IMR-90 (cell line): ENCODE measurements at regions of chr4 and their contacts with region 1.

Region 1: GRCh38 chr4:168183717-168184608 is 91.6 kb downstream of the ANXA10 start:
- DNase-seq: peak; percentile 59
- ATAC-seq: peak; percentile 61
- H3K4me3 ChIP-seq: no peak overlapping the region
- H3K27ac ChIP-seq: no peak overlapping the region
- H3K4me1 ChIP-seq: no peaks in the 10 kb centered on the region
- H3K27me3 ChIP-seq: no peaks in the 10 kb centered on the region
- CTCF ChIP-seq: peak; percentile 66
- POLR2A ChIP-seq: no peak
- RAD21 ChIP-seq: peak; percentile 80

Region 2: GRCh38 chr4:168318266-168318895 is 134.4 kb after region 1 on chr4 and contains the start of gene DDX60:
- CTCF ChIA-PET with region 1: no interaction called
- POLR2A ChIA-PET with region 1: no interaction called
- dilution Hi-C with region 1: no loop called
- in situ Hi-C with region 1: no loop called
- intact Hi-C with region 1: loop called (anchors 5 kb)
- DNase-seq: peak; percentile 73
- ATAC-seq: peak; percentile 93
- H3K4me3 ChIP-seq: peak within 1 kb of the TSS; percentile 74
- H3K27ac ChIP-seq: peak within 1 kb of the TSS; percentile 85
- H3K4me1 ChIP-seq: no peaks in the 10 kb centered on the region
- H3K27me3 ChIP-seq: no peaks in the 10 kb centered on the region
- CTCF ChIP-seq: peak; percentile 40
- POLR2A ChIP-seq: peak; percentile 28; the same call in 1 of the 2 replicates
- RAD21 ChIP-seq: peak; percentile 41
- total RNA-seq, gene DDX60: 6.6 and 11.4 TPM in 2 replicates

Region 3: DNA sequence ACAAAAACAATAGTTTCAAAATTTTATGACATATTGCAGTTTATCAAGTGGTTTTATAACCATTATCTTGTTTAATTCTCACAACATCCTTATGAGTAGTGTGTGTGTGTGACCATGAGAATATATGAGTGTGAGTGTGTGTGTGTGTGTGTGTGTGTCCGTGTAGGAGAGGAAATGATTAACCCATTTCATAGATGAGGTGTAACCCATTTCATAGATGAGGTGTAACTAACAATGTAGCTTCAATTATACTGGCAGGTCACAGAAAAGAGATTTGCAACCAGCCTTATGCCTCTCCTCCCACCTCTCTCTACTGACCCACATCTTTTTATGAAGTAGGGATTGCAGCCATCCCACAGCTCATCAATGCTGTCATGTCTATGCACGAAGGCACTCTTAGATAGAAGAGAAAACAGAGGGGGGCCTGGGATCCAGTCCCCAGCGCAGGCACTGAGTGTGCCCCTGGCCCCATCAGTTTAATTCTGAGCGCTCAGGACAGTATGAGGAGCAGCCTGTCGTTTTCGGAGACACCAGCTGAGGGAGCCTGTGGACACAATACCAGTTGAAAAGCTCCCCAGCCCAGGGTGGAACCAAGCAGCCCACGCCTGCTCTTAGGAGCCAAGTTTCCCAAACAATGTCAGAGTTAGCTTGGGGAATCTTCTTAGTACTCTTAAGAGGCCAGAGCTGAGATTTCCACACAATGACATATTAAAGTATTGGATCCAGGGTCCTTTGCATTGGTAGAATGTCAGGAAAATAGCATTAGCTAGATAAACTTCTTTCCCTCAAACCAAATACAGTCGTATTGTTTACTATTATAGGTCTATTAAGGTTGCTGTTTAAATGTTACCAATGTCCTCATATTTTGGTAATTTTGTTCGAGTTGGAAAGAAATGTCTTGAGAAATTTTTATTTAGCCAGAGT is 401.5 kb after region 1 on chr4:
- CTCF ChIA-PET with region 1: no interaction called
- POLR2A ChIA-PET with region 1: no interaction called
- dilution Hi-C with region 1: no loop called
- in situ Hi-C with region 1: no loop called
- intact Hi-C with region 1: loop called (anchors 5 kb)
- DNase-seq: peak; percentile 82
- ATAC-seq: peak; percentile 87
- H3K4me3 ChIP-seq: no peak overlapping the region
- H3K27ac ChIP-seq: no peak overlapping the region
- H3K4me1 ChIP-seq: peaks cover 18% of the 10 kb centered on the region
- H3K27me3 ChIP-seq: no peaks in the 10 kb centered on the region
- CTCF ChIP-seq: peak; percentile 76
- POLR2A ChIP-seq: no peak
- RAD21 ChIP-seq: peak; percentile 88

Region 4: DNA sequence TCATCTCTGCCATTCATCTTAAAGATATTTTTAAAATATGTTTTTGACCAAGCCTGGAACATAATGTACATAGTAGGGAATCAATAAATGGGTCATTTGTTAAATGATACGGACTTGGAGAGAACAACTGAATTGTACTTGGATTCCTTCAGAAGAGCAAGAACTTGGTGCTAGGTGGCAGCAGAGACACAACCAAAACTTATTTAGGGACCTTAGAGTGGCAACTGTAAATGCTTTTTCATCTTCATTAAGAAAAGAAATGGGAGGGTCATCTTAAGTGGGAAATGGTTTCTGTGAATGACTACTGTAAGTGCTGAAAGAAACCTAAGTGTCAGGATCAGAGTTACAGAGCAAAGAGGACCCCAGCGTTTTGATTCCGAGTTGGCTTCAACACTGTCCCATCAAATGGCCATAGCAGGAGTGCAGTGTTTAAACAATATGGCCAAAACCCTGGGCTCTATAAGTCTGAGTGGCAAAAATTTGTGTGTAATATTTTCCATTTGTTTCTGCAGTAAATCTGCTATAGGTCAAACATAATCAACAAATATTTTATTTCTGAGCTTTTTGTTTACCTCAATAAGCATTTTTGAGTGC is 526.5 kb after region 1 on chr4:
- CTCF ChIA-PET with region 1: interaction called, 3 read pairs
- POLR2A ChIA-PET with region 1: no interaction called
- dilution Hi-C with region 1: no loop called
- in situ Hi-C with region 1: no loop called
- intact Hi-C with region 1: loop called (anchors 2 kb)
- DNase-seq: peak; percentile 79
- ATAC-seq: peak; percentile 77
- H3K4me3 ChIP-seq: no peak overlapping the region
- H3K27ac ChIP-seq: no peak overlapping the region
- H3K4me1 ChIP-seq: peaks cover 11% of the 10 kb centered on the region
- H3K27me3 ChIP-seq: no peaks in the 10 kb centered on the region
- CTCF ChIP-seq: peak; percentile 71
- POLR2A ChIP-seq: no peak
- RAD21 ChIP-seq: peak; percentile 80

Region 5: DNA sequence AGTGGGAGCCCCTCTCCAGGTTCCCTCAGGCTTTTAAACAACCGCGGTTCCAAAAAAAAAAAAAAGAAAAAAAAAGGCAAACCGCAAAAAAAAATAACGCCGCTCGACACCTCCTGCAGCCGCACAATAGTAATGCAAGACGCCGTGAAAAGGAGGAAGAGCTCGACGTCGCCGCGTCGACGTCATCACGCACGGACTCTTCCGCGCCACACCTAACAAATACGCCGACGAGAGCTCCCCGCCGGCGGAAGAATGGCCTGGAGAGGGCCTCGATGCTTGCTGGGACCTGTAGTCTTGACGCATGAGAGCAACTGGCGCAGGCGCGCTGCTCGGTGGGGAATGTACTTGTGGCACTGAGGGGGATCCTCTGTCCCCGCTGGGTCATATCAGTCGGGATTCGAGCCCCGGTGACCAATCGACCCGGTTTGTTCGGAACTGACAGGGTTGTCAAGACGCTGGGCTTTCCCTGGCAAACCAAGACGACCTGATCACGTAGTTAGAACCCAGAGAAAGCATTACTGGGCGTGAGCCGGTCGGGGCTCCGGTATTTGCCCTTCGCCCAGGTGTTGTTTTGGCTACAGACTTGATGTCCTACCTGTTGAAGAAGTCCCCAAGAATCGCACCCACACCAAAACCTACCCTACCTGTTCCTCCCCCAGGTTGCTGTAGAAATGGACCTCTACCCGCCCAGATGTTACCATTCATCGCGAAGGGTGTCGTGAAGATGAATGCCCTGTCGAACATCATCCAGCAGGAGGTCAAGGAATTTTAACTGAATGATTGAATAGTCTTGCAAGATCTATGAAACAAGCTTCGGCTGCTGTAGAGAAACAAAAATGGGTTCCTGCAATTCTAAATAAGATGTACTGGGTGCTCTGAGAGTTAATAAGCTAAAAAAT is 826.4 kb after region 1 on chr4 and contains the start of gene CBR4:
- CTCF ChIA-PET with region 1: no interaction called
- POLR2A ChIA-PET with region 1: no interaction called
- dilution Hi-C with region 1: no loop called
- in situ Hi-C with region 1: no loop called
- intact Hi-C with region 1: loop called (anchors 5 kb)
- DNase-seq: peak; percentile 99
- ATAC-seq: peak; percentile 98
- H3K4me3 ChIP-seq: peak within 1 kb of the TSS; percentile 78
- H3K27ac ChIP-seq: peak within 1 kb of the TSS; percentile 87
- H3K4me1 ChIP-seq: peaks cover 4% of the 10 kb centered on the region
- H3K27me3 ChIP-seq: no peaks in the 10 kb centered on the region
- CTCF ChIP-seq: peak; percentile 40
- POLR2A ChIP-seq: peak; percentile 86
- RAD21 ChIP-seq: peak; percentile 28
- total RNA-seq, gene CBR4: 4.5 and 9.2 TPM in 2 replicates